PC-9 (cell line): ENCODE measurements at regions of chr4 and their contacts with region 1.

Region 1: DNA sequence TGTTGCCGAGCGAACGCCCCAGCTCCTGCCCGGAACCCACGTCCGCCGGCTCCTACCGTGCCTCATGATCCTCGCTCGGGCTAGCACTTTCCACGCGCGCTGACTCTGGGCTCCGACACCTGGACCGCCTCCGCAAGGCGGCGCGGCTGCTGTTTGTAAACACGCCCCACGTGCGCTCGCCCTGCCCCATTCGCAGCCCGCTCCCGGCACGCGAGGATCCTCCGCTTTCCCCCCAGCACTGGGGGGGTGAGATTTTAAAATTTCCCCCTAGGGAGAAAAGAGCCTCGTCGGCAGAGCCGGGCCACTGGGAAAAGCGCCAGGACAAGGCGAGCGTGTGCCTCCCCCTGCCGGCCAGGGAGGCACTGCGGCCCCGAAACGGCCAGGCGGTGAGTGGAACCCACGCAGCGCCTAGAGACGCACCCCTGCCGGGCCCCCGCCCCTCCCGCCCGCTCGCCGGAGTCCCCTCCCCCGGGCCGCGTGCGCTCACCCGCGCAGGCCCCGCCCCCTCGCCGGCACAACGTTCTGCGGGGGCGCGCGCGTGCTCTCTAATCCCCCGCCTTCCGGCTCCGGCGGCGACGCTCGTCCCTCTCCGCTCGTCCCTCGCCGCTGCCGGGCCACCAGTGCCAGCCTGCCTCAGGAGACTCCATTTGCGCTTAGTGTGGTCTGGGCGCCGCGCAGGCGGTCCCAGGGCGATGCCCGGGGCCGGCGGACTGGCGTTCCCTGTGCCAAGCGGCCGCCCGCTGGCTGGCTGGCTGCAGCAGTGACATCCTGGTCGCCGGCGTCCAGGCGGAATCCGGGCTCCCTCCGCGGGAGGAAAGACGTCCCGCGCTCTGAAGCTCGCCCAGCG is at the start of gene TIGD2:
- DNase-seq: peak; percentile 60 to 75
- H3K4me3 ChIP-seq: peak within 1 kb of the TSS; percentile 73
- H3K27ac ChIP-seq: peak within 1 kb of the TSS; percentile 59
- H3K4me1 ChIP-seq: peaks cover 9% of the 10 kb centered on the region
- H3K27me3 ChIP-seq: no peaks in the 10 kb centered on the region
- CTCF ChIP-seq: peak; percentile 70
- total RNA-seq, gene TIGD2: 10.9 and 11.5 TPM in 2 replicates

Region 2: DNA sequence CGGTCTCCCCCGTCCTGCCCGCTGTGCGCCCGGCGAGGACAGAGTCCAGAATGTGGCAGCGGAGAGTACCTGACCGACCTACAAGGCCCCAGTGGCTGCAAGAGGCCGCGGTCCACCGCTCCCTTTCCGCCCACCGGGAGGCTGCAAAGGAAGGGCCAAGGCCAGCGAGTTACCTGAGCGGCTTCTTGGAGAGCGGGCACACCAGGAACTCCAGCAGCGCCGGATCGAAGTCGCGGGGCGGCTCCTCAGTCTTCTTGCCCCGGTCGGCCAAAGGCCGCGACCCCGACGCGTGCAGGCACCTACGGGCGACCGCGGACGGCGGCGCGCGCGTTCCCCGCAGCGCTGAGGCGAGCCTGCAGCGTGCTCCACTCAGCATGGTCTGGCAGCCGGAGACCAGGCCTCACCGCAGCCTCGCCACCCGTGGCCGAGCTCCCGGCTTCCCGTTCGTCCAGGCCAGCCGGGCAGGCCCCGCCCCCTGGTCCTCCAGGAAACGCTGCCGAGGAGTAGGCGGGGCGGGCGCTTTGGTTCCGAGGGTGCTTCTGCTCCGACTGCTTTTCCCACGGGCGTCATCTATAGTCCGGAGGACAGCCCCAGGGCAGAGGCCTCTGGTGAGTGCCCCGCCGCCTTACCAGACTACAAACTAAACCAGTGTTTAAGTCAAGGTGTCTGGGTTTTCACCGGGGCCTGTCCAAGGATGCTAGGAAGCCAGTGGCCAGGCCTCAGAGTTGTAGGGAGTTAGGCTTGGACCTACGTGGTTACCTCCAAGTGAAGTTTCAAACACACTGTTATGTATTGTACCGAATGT is 587.7 kb before region 1 on chr4 and contains the start of gene PYURF:
- CTCF ChIA-PET with region 1: no interaction called
- POLR2A ChIA-PET with region 1: no interaction called
- intact Hi-C with region 1: loop called (anchors 10 kb)
- DNase-seq: peak; percentile 80 to 87
- H3K4me3 ChIP-seq: peak within 1 kb of the TSS; percentile 85
- H3K27ac ChIP-seq: peak within 1 kb of the TSS; percentile 73
- H3K4me1 ChIP-seq: peaks cover 26% of the 10 kb centered on the region
- H3K27me3 ChIP-seq: no peaks in the 10 kb centered on the region
- CTCF ChIP-seq: no peak
- total RNA-seq, gene PYURF: 53.3 and 55.0 TPM in 2 replicates

Region 3: DNA sequence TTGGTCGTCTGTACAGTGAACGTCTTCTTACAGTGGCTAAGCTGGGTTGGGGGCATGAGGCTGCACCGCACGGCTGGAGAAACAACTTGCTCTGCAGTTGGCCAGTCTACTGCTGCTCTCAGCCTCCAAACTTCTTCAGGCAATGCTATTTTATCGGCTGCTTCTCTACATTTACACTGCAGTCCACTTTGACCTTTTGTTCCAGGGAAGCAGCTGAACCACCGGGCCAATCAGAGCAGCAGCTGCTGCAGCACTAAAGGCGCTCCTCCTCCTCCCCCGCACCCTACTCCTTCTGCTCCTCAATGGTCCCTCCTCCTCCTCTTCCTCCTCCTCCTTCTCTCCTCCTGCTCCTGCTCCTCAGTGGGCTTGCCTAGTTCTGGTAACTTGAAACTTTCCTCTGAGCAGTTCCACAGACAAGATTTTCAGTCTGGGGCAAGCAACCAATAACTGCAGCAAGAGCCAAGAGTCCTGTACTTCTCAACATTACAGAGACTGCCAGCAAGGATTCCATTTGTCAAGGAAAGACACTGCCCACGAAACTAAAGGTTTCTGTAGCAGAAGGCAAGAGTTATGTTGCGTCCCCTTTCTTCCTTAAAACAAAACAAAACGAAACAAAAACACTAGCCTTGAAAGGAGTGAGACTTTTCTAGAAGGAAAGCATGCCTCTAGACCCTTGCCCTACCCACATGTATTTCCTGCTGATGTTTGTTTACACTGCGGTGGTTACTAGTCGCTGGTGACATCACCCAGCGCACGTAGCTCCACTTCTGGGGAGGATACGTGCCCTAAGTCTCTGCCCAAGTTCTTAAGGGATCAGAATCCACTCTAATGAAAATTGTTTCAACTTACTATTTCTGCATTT is 287.9 kb before region 1 on chr4:
- CTCF ChIA-PET with region 1: no interaction called
- POLR2A ChIA-PET with region 1: no interaction called
- intact Hi-C with region 1: loop called (anchors 5 kb)
- DNase-seq: peak; percentile 79 to 84
- H3K4me3 ChIP-seq: peak overlapping the region; percentile 70
- H3K27ac ChIP-seq: peak overlapping the region; percentile 92
- H3K4me1 ChIP-seq: peaks cover 31% of the 10 kb centered on the region
- H3K27me3 ChIP-seq: no peaks in the 10 kb centered on the region
- CTCF ChIP-seq: no peak

Region 4: GRCh38 chr4:89024051-89024675 is 87.0 kb before region 1 on chr4:
- CTCF ChIA-PET with region 1: no interaction called
- POLR2A ChIA-PET with region 1: no interaction called
- intact Hi-C with region 1: loop called (anchors 5 kb)
- DNase-seq: peak; percentile 15 to 60
- H3K4me3 ChIP-seq: no peak overlapping the region
- H3K27ac ChIP-seq: no peak overlapping the region
- H3K4me1 ChIP-seq: 0 out of 2 replicates have a peak, but pooled peaks cover 5% of the 10 kb centered on the region
- H3K27me3 ChIP-seq: no peaks in the 10 kb centered on the region
- CTCF ChIP-seq: peak; percentile 81

Region 5: DNA sequence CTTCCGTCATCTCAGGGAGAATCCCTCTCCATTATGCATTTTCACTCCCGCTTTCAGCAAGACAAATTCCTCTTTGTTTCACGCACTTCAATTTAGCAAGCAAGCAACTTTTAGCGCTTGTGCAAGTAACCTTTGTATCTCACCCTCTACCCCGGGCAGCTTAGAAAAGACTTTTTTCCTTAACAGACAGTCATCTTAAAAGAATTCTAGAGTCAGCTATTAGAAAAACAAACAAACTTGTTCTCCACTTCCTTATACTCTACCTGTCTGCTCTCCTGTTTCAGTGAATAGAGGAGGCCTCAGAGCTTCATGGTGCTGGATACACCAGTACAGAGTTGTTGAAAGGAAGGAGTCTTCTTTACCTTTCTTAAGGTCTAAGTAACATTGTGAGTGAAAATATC is 12.2 kb after region 1 on chr4:
- CTCF ChIA-PET with region 1: no interaction called
- POLR2A ChIA-PET with region 1: interaction called, 4 read pairs
- intact Hi-C with region 1: loop called (anchors 1 kb)
- DNase-seq: peak; percentile 27 to 90
- H3K4me3 ChIP-seq: no peak overlapping the region
- H3K27ac ChIP-seq: peak overlapping the region; percentile 71
- H3K4me1 ChIP-seq: peaks cover 30% of the 10 kb centered on the region
- H3K27me3 ChIP-seq: no peaks in the 10 kb centered on the region
- CTCF ChIP-seq: no peak

Region 6: GRCh38 chr4:89136525-89136924 is 25.3 kb after region 1 on chr4:
- CTCF ChIA-PET with region 1: no interaction called
- POLR2A ChIA-PET with region 1: no interaction called
- intact Hi-C with region 1: loop called (anchors 1 kb)
- DNase-seq: peak in 1 of 2 experiments; percentile 81
- H3K4me3 ChIP-seq: no peak overlapping the region
- H3K27ac ChIP-seq: peak overlapping the region; percentile 37; the same call in 1 of the 2 replicates
- H3K4me1 ChIP-seq: peaks cover 12% of the 10 kb centered on the region
- H3K27me3 ChIP-seq: no peaks in the 10 kb centered on the region
- CTCF ChIP-seq: no peak

Region 7: DNA sequence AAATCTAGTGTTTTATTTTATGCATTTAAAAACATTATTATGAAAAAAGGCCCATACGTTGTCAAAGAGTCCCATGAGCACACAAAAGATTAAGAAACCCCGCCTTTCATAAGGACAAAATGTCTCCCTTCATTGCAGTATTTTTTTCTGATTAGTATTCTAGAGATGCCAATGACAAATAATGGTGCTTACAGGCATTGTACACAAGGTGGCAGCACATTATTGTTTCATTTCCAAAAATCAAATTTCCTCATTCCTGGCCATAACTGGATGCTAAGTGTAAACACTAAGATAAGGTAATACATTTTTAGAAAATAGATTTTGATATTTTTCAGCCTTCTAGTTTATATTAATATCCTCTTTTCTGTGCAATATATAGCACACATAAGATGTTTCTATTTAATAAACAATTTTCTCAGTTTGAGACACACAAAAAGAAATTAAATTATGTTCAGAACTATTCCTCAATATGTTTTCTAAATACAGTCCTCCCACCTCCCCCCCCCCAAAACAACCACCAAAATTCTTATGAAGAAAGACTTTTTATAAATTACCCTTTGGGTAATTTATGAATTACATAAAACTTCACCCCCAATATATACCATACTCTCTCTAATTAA is 47.8 kb after region 1 on chr4:
- CTCF ChIA-PET with region 1: no interaction called
- POLR2A ChIA-PET with region 1: no interaction called
- intact Hi-C with region 1: loop called (anchors 2 kb)
- DNase-seq: peak in 1 of 2 experiments; percentile 36
- H3K4me3 ChIP-seq: no peak overlapping the region
- H3K27ac ChIP-seq: no peak overlapping the region
- H3K4me1 ChIP-seq: no peaks in the 10 kb centered on the region
- H3K27me3 ChIP-seq: no peaks in the 10 kb centered on the region
- CTCF ChIP-seq: peak; percentile 80